Right ventricle myocardium superior (tissue), 1 donor: ENCODE measurements at regions of chr12 and their contacts with region 1.

Region 1: GRCh38 chr12:14723763-14724162 is 27.4 kb upstream of the GUCY2C start:
- DNase-seq: peak; percentile 57
- ATAC-seq: peak; percentile 96

Region 2: GRCh38 chr12:14858513-14858912 is 134.8 kb after region 1 on chr12:
- intact Hi-C with region 1: no loop called
- DNase-seq: no peak
- ATAC-seq: no peak

Region 3: DNA sequence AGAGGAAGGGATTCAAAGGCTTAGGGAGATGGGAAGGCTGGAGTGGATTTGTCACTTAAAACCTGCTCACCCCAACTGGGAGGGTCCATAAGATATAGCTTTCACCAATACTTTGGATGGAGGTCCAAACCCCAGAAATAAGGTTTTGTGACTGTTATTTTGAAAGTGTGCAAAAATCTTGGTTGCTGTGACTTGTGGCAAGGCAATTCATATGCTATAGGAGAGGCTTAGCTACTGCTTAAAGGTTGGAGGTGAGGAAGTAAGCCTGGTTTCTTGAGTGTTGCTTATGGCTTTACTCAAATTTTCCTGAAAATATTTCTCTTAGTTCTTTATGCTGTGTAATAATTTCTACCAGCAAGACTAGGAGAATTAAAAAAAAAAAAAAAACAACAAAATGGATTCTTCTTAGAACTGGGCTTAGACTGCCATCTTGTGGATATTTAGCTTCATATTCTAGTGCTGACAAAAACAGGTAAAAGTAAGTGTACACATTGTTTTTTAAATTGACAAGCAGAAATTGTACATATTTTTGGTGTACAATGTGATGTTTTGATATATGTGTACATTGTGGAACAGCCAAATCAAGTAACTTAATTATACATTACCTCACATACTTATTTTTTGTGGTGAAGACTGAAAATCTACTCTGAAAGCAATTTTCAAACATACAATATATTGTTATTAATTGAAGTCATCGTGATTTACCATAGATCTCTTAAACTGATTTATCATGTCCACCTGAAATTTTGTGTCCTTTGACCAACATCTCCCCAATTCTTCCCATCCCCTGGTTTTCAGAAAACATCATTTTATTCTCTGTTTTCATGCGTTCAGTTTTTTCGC is 272.0 kb after region 1 on chr12:
- intact Hi-C with region 1: loop called (anchors 10 kb)
- DNase-seq: no peak
- ATAC-seq: peak; percentile 68